CD4-positive, alpha-beta T cell (primary cell): ENCODE measurements at regions of chr6 and their contacts with region 1.

Region 1: DNA sequence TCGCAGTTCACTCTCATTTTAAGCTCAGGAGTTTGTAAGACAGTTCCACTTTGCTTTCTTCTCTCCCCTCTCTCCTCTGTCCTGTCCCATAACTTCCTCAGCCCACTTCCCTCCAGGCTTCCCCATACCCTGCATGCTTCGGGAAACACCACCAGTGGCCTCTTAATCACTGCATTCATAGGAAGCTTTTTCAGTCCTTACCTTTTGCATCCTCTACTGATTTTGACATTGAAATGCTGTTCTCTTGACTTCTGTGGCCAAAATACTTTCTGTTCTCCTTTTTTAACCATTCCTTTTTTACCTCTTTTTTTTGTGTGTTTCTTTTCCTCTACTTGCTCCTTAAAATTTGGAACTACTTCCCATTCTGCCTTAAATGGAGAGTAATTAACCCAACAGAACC is 69.7 kb downstream of the HIVEP1 start:
- DNase-seq: no peak
- ATAC-seq: no peak
- H3K4me3 ChIP-seq: no peak overlapping the region
- H3K4me3 Mint-ChIP-seq: no peak overlapping the region
- H3K27ac ChIP-seq: no peak overlapping the region
- H3K27ac Mint-ChIP-seq: no peak overlapping the region
- H3K4me1 ChIP-seq: peaks cover 6% of the 10 kb centered on the region
- H3K4me1 Mint-ChIP-seq: peaks cover 76% of the 10 kb centered on the region
- H3K27me3 ChIP-seq: no peaks in the 10 kb centered on the region
- H3K27me3 Mint-ChIP-seq: no peaks in the 10 kb centered on the region
- CTCF ChIP-seq: no peak

Region 2: DNA sequence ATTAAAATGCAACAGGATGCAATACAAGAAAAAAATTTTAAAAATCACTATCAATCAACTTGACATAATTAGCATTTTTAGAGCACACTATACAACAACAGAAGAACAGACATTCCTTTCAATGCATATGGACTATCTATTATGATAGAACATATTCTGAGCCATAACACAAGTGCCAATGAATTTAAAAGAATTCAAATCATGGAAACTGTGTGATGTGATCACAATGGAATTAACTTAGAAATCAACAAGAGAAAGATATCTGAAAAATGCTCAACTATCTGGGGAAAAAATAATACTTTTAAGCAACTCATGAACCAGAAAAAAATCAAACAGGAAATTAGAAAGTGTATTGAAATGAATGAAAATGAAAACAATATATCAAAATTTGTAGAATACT is 409.5 kb before region 1 on chr6:
- CTCF ChIA-PET with region 1: no interaction called
- POLR2A ChIA-PET with region 1: no interaction called
- intact Hi-C with region 1: no loop called
- DNase-seq: no peak
- ATAC-seq: no peak
- H3K4me3 ChIP-seq: no peak overlapping the region
- H3K4me3 Mint-ChIP-seq: no peak overlapping the region
- H3K27ac ChIP-seq: no peak overlapping the region
- H3K27ac Mint-ChIP-seq: no peak overlapping the region
- H3K4me1 ChIP-seq: no peaks in the 10 kb centered on the region
- H3K4me1 Mint-ChIP-seq: no peaks in the 10 kb centered on the region
- H3K27me3 ChIP-seq: peaks cover 0 to 14% of the 10 kb centered on the region in 2 experiments
- H3K27me3 Mint-ChIP-seq: peaks cover 6% of the 10 kb centered on the region
- CTCF ChIP-seq: no peak

Region 3: GRCh38 chr6:11824986-11825385 is 256.8 kb before region 1 on chr6:
- CTCF ChIA-PET with region 1: no interaction called
- POLR2A ChIA-PET with region 1: no interaction called
- intact Hi-C with region 1: loop called in 1 of 2 experiments (anchors 10 kb)
- DNase-seq: peak in 2 of 14 experiments; percentile 57 to 67
- ATAC-seq: peak; percentile 56
- H3K4me3 ChIP-seq: no peak overlapping the region
- H3K4me3 Mint-ChIP-seq: no peak overlapping the region
- H3K27ac ChIP-seq: no peak overlapping the region
- H3K27ac Mint-ChIP-seq: no peak overlapping the region
- H3K4me1 ChIP-seq: no peaks in the 10 kb centered on the region
- H3K4me1 Mint-ChIP-seq: peaks cover 8% of the 10 kb centered on the region
- H3K27me3 ChIP-seq: no peaks in the 10 kb centered on the region
- H3K27me3 Mint-ChIP-seq: no peaks in the 10 kb centered on the region
- CTCF ChIP-seq: no peak